Natural killer cell (primary cell): ENCODE measurements at regions of chr12 and their contacts with region 1.

Region 1: GRCh38 chr12:101839324-101840283 is 8.8 kb upstream of the GNPTAB start:
- DNase-seq: peak; percentile 56 to 89
- ATAC-seq: peak; percentile 83 to 93 (median 89)
- H3K4me3 ChIP-seq: no peak overlapping the region
- H3K4me3 Mint-ChIP-seq: no peak overlapping the region
- H3K27ac ChIP-seq: no peak overlapping the region
- H3K27ac Mint-ChIP-seq: peak overlapping the region; percentile 5 to 78
- H3K4me1 ChIP-seq: peaks cover 14% of the 10 kb centered on the region
- H3K4me1 Mint-ChIP-seq: peaks cover 9% of the 10 kb centered on the region in 2 donors
- H3K27me3 ChIP-seq: no peaks in the 10 kb centered on the region
- H3K27me3 Mint-ChIP-seq: no peaks in the 10 kb centered on the region
- CTCF ChIP-seq: peak; percentile 97

Region 2: DNA sequence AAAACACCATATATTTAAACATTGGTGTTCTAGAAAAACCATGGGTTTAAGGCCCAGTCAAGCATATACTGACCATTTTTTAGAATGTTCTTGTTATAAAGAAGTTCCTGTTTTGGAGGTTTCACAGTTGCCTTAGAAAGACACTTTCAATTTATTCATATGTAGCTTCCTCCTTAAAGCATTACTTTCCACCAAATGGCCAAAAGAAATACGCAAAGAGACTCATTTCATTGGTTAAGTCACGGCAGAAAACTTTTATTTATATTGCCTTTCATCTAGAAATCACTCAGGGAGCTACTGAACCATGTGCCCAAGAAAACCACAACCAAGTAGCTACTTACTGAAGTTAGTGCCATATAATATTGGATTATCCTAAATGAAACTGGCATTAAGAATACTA is 204.9 kb before region 1 on chr12:
- intact Hi-C with region 1: no loop called
- DNase-seq: no peak
- ATAC-seq: no peak
- H3K4me3 ChIP-seq: no peak overlapping the region
- H3K4me3 Mint-ChIP-seq: no peak overlapping the region
- H3K27ac ChIP-seq: no peak overlapping the region
- H3K27ac Mint-ChIP-seq: no peak overlapping the region
- H3K4me1 ChIP-seq: peaks cover 3% of the 10 kb centered on the region
- H3K4me1 Mint-ChIP-seq: no peaks in the 10 kb centered on the region
- H3K27me3 ChIP-seq: no peaks in the 10 kb centered on the region
- H3K27me3 Mint-ChIP-seq: peaks cover 6 to 8% of the 10 kb centered on the region in 2 donors
- CTCF ChIP-seq: no peak

Region 3: GRCh38 chr12:101773650-101774162 is 65.9 kb before region 1 on chr12:
- intact Hi-C with region 1: loop called (anchors 1 kb)
- DNase-seq: peak; percentile 58 to 88
- ATAC-seq: peak; percentile 92 to 98 (median 95)
- H3K4me3 ChIP-seq: no peak overlapping the region
- H3K4me3 Mint-ChIP-seq: no peak overlapping the region
- H3K27ac ChIP-seq: no peak overlapping the region
- H3K27ac Mint-ChIP-seq: peak overlapping the region; percentile 42 to 76
- H3K4me1 ChIP-seq: peaks cover 8% of the 10 kb centered on the region
- H3K4me1 Mint-ChIP-seq: peaks cover 17 to 42% of the 10 kb centered on the region in 2 donors
- H3K27me3 ChIP-seq: no peaks in the 10 kb centered on the region
- H3K27me3 Mint-ChIP-seq: no peaks in the 10 kb centered on the region
- CTCF ChIP-seq: peak; percentile 95

Region 4: DNA sequence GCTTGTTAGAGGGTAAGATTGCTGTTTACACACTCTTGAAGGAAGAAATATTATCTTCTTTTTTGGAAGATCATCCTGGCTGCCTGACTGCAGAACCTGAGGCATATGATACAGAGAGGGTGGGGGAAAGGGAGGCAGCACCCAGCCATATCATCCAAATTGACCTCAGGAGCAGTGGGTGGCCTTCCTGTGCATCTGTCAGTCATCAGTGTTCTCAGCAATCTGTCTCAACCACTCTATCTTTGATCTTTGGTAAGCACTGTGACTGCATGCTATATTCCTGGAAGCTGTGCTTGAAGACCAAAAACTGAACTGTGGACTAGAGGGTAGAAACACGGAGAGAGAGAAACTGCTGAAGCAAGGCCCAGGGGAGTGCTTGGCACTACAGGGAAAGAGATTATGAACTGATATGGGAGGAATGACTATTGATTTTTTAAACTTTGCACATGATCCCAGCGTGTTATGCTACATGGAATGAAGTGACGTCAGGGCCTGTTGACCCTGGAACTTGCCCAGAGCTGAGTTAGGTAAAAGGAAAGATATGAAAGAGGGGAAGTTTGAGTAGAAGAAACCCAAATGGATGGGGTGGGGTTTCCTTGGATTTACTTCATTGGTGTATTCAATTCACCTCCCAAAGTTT is 1289.4 kb after region 1 on chr12:
- intact Hi-C with region 1: no loop called
- DNase-seq: no peak
- ATAC-seq: no peak
- H3K4me3 ChIP-seq: no peak overlapping the region
- H3K4me3 Mint-ChIP-seq: no peak overlapping the region
- H3K27ac ChIP-seq: no peak overlapping the region
- H3K27ac Mint-ChIP-seq: no peak overlapping the region
- H3K4me1 ChIP-seq: no peaks in the 10 kb centered on the region
- H3K4me1 Mint-ChIP-seq: no peaks in the 10 kb centered on the region
- H3K27me3 ChIP-seq: no peaks in the 10 kb centered on the region
- H3K27me3 Mint-ChIP-seq: no peaks in the 10 kb centered on the region
- CTCF ChIP-seq: no peak